MCF 10A (cell line): ENCODE measurements at regions of chr18 and their contacts with region 1.

Region 1: GRCh38 chr18:11995445-11996189 is 14.3 kb downstream of the IMPA2 start:
- DNase-seq: peak; percentile 76
- H3K4me3 Mint-ChIP-seq: no peak overlapping the region
- H3K27ac Mint-ChIP-seq: peak overlapping the region; percentile 97
- H3K4me1 Mint-ChIP-seq: peaks cover 29% of the 10 kb centered on the region
- H3K27me3 Mint-ChIP-seq: no peaks in the 10 kb centered on the region
- CTCF ChIP-seq: peak; percentile 88

Region 2: GRCh38 chr18:11700876-11701275 is 294.7 kb before region 1 on chr18:
- CTCF ChIA-PET with region 1: no interaction called
- POLR2A ChIA-PET with region 1: no interaction called
- intact Hi-C with region 1: no loop called
- DNase-seq: no peak
- H3K4me3 Mint-ChIP-seq: no peak overlapping the region
- H3K27ac Mint-ChIP-seq: no peak overlapping the region
- H3K4me1 Mint-ChIP-seq: no peaks in the 10 kb centered on the region
- H3K27me3 Mint-ChIP-seq: no peaks in the 10 kb centered on the region
- CTCF ChIP-seq: no peak

Region 3: GRCh38 chr18:11908182-11909060 is 87.2 kb before region 1 on chr18 and contains the start of gene MPPE1:
- CTCF ChIA-PET with region 1: interaction called, 11 read pairs
- POLR2A ChIA-PET with region 1: interaction called, 14 read pairs
- intact Hi-C with region 1: no loop called
- DNase-seq: peak; percentile 82
- H3K4me3 Mint-ChIP-seq: peak within 1 kb of the TSS; percentile 92
- H3K27ac Mint-ChIP-seq: peak within 1 kb of the TSS; percentile 89
- H3K4me1 Mint-ChIP-seq: no peaks in the 10 kb centered on the region
- H3K27me3 Mint-ChIP-seq: no peaks in the 10 kb centered on the region
- CTCF ChIP-seq: no peak
- total RNA-seq, gene MPPE1: 15.7 and 24.7 TPM in 2 replicates

Region 4: DNA sequence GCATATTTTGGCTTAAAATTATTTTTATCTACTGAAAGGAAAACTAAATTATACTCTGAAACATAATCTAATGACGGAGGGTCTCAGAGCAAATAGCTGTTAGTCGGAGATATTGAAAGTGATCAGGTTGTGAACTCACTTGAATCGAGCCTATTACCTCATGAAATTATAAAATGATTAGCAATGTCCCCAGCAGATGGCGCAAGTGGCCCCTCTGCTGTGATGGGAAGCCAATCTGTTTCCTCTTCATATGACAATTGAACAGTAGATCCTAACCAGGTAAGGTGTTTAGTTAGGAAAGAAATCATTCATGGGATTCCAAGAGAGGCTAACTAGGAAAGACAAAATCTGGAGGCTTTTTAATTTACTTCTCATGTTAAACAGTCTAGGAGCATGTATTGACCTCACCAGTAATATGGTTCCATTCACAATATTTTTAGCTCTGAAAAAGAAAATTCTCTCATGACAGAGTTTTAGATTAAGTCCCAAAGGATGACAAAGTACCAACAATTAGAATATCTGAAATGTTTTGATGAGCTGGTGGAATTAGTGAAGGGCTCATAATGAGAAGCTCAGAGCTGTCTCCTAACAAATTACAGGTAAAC is 57.6 kb before region 1 on chr18:
- CTCF ChIA-PET with region 1: interaction called, 458 read pairs
- POLR2A ChIA-PET with region 1: interaction called, 54 read pairs
- intact Hi-C with region 1: loop called (anchors 1 kb)
- DNase-seq: peak; percentile 80
- H3K4me3 Mint-ChIP-seq: no peak overlapping the region
- H3K27ac Mint-ChIP-seq: no peak overlapping the region
- H3K4me1 Mint-ChIP-seq: peaks cover 13% of the 10 kb centered on the region
- H3K27me3 Mint-ChIP-seq: no peaks in the 10 kb centered on the region
- CTCF ChIP-seq: peak; percentile 73

Region 5: GRCh38 chr18:11980555-11981382 is 14.8 kb before region 1 on chr18:
- CTCF ChIA-PET with region 1: interaction called, 36 read pairs
- POLR2A ChIA-PET with region 1: interaction called, 97 read pairs
- intact Hi-C with region 1: loop called (anchors 1 kb)
- DNase-seq: peak; percentile 99
- H3K4me3 Mint-ChIP-seq: peak overlapping the region; percentile 75
- H3K27ac Mint-ChIP-seq: peak overlapping the region; percentile 94
- H3K4me1 Mint-ChIP-seq: peaks cover 10% of the 10 kb centered on the region
- H3K27me3 Mint-ChIP-seq: no peaks in the 10 kb centered on the region
- CTCF ChIP-seq: no peak

Region 6: DNA sequence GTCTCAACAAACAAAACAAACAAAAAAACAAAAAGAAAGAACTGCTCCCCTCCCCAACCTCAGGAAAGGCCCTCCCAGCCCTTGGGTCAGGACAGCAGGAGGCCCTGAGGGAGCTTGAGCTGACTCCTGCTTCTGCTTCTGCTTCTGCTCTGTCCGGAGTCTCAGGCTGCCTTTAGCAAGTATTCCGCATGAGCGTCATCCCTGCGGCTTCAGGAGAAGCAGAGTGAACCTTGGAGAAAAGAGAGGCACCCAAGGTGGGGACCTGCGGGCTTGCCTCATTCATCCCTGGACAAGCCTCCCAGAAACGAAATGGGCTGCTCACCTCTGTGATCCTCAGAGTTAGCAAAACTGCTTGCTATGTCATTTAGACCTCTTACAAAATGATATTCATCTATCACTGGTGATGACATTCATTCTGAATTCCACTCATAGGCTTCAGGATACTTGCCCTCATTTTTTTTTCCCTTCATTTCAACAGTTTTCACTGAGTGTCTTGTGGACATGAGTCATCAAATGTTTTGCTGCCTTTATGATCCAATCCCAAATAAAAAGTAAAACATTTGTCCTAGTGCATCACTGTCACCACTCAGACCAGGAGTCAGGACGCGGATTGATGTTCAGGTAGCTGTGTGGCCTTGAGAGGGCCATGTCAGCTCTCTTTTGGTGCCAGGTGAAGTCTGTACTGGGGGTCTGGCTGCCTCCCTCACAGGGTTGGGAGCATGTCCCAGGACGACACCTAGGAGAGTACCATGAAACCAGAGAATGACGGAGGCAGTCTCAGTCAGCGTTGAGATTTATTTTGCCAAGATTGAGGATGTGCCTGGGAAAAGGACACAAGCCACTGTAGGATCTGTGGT is 37.4 kb after region 1 on chr18:
- CTCF ChIA-PET with region 1: interaction called, 10 read pairs
- POLR2A ChIA-PET with region 1: no interaction called
- intact Hi-C with region 1: loop called (anchors 5 kb)
- DNase-seq: peak; percentile 17
- H3K4me3 Mint-ChIP-seq: no peak overlapping the region
- H3K27ac Mint-ChIP-seq: peak overlapping the region; percentile 28
- H3K4me1 Mint-ChIP-seq: peaks cover 15% of the 10 kb centered on the region
- H3K27me3 Mint-ChIP-seq: no peaks in the 10 kb centered on the region
- CTCF ChIP-seq: no peak

Region 7: DNA sequence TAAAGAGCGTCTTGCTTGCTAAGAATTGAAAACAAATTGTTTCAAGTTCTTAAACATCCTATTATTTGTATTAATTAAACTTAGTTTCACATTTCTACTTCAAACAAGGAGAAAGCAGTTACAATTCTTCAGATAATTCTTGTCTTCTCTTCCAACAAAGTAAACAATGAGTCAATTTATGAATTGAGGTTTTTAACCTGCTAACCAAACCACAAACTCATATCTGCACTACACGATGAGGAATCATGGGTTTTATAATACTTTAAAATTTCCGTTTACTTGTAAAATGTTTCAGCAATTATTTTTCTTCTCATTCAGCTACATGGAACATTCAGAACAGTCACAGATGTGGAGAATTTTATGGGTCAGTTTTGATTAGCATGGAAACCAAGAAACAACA is 548.1 kb after region 1 on chr18:
- CTCF ChIA-PET with region 1: no interaction called
- POLR2A ChIA-PET with region 1: no interaction called
- intact Hi-C with region 1: no loop called
- DNase-seq: no peak
- H3K4me3 Mint-ChIP-seq: no peak overlapping the region
- H3K27ac Mint-ChIP-seq: peak overlapping the region; percentile 69
- H3K4me1 Mint-ChIP-seq: peaks cover 8% of the 10 kb centered on the region
- H3K27me3 Mint-ChIP-seq: no peaks in the 10 kb centered on the region
- CTCF ChIP-seq: no peak